Activated CD4-positive, alpha-beta memory T cell treated with anti-CD3 and anti-CD28 coated beads for 36 hours (primary cell): ENCODE measurements at regions of chr14 and their contacts with region 1.

Region 1: GRCh38 chr14:75673345-75674035 is 12.4 kb downstream of the TTLL5 start:
- DNase-seq: no peak
- H3K4me3 Mint-ChIP-seq: no peak overlapping the region
- H3K27ac Mint-ChIP-seq: peak overlapping the region; percentile 40
- H3K4me1 Mint-ChIP-seq: peaks cover 27% of the 10 kb centered on the region
- H3K27me3 Mint-ChIP-seq: no peaks in the 10 kb centered on the region

Region 2: GRCh38 chr14:75720842-75721498 is 47.5 kb after region 1 on chr14:
- CTCF ChIA-PET with region 1: no interaction called
- POLR2A ChIA-PET with region 1: no interaction called
- intact Hi-C with region 1: loop called (anchors 1 kb)
- DNase-seq: no peak
- H3K4me3 Mint-ChIP-seq: no peak overlapping the region
- H3K27ac Mint-ChIP-seq: no peak overlapping the region
- H3K4me1 Mint-ChIP-seq: peaks cover 13% of the 10 kb centered on the region
- H3K27me3 Mint-ChIP-seq: no peaks in the 10 kb centered on the region